AG04449 (cell line): ENCODE measurements at regions of chr6 and their contacts with region 1.

Region 1: DNA sequence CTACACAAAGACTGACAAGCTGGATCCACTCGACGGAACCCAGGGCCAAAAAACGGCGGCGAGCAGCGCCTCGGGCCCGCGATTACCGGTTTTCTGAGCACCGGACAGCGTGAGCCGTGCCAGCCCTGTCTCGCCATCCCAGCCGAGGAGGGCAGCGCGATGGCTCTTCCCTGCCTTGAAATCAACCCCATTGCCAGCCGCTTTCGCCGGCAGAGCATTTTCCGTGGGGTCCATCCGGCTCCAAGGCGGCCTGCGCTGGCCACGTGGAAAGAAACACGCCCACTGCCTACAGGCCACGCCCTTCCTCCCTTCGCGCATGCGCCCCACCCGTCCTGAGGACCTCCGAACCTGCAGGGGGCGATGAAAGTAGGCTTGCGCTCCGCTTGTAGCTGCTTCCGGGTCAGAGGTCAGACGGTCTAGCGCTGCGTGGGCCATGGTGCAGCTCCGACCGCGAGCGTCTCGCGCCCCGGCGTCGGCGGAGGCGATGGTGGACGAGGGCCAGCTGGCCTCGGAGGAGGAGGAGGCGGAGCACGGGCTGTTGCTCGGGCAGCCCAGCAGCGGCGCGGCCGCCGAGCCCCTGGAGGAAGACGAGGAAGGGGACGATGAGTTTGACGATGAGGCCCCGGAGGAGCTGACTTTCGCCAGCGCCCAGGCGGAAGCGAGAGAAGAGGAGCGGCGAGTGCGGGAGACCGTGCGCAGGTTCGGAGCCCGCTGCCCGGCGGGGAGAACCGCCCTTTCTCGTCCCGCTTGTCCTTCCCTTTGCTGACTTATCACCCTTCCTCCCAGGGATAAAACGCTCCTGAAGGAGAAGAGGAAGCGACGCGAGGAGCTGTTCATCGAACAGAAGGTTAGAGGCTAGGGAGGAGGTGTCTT is at the start of gene NOL7:
- DNase-seq: peak; percentile 91
- H3K4me3 ChIP-seq: peak within 1 kb of the TSS; percentile 93
- CTCF ChIP-seq: peak; percentile 96

Region 2: GRCh38 chr6:13336553-13336952 is 278.6 kb before region 1 on chr6:
- CTCF ChIA-PET with region 1: interaction called, 16 read pairs
- POLR2A ChIA-PET with region 1: interaction called, 6 read pairs
- DNase-seq: peak; percentile 40
- H3K4me3 ChIP-seq: no peak overlapping the region
- CTCF ChIP-seq: peak; percentile 89

Region 3: GRCh38 chr6:13478525-13478966 is 136.6 kb before region 1 on chr6:
- CTCF ChIA-PET with region 1: no interaction called
- POLR2A ChIA-PET with region 1: no interaction called
- DNase-seq: no peak
- H3K4me3 ChIP-seq: no peak overlapping the region
- CTCF ChIP-seq: no peak

Region 4: GRCh38 chr6:13593720-13594119 is 21.4 kb before region 1 on chr6:
- CTCF ChIA-PET with region 1: interaction called, 18 read pairs
- POLR2A ChIA-PET with region 1: interaction called, 4 read pairs
- DNase-seq: no peak
- H3K4me3 ChIP-seq: no peak overlapping the region
- CTCF ChIP-seq: no peak

Region 5: GRCh38 chr6:13635948-13636658 is 20.9 kb after region 1 on chr6:
- CTCF ChIA-PET with region 1: interaction called, 78 read pairs
- POLR2A ChIA-PET with region 1: interaction called, 4 read pairs
- DNase-seq: no peak
- H3K4me3 ChIP-seq: no peak overlapping the region
- CTCF ChIP-seq: no peak

Region 6: DNA sequence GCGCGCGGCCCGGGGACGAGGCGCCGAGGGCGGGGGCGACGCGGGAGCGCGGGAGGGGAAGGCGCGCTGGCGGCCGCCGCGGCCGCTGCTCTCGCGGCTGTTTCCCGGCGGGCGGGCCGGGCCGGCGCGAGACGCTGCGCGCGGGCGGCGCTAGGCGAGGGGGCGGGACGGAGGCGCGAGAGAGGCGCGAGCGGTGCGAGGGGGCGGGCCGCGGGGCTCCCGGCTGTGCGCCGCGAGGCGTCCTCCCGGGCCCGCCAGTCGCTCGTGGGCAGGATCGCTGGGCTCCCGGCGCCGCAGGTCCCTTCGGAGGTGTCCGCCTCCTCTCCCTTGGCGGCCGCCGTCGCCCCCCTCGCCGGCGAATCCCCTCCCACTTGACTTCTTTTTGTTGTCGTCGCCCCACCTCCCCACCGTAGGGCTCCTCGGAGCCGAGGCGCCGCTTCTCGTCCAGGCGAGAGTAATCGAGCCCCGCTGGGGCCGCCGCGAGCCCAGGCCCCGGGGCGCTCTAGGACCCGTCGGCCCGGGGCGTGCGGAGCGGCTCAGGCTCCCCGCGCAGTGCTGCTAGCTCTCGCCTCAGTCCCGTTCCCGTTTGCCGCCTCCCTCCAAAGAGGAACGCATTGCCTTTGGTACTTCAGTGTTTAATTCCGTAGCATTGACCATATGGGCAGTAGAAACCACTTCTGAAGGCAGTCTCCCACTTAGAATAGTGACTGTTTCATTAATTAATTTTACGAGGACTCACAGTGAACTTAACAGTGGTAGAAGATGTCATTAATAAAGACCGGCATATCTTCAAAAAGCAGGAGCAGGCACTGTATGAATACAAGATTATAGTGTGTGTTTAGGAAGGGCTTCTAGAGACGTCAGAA is 96.8 kb after region 1 on chr6 and contains the start of gene RANBP9:
- CTCF ChIA-PET with region 1: interaction called, 19 read pairs
- POLR2A ChIA-PET with region 1: interaction called, 16 read pairs
- DNase-seq: peak; percentile 37
- H3K4me3 ChIP-seq: peak within 1 kb of the TSS; percentile 78
- CTCF ChIP-seq: no peak